ENCODE measurements at regions of chrX and their contacts with region 1.

Region 1: GRCh38 chrX:136920001-136920400 is 39.5 kb upstream of the RBMX start:
- DNase-seq: peak in 1 of 10 donors; percentile 19
- H3K4me3 ChIP-seq: no peak overlapping the region
- H3K27ac ChIP-seq: no peak overlapping the region
- H3K27me3 ChIP-seq: peaks cover 0 to 6% (median 0%) of the 10 kb centered on the region in 45 donors
- CTCF ChIP-seq: no peak

Region 2: GRCh38 chrX:136711147-136711546 is 208.9 kb before region 1 on chrX:
- intact Hi-C with region 1: loop called in 1 of 2 experiments (anchors 2 kb)
- DNase-seq: peak in 1 of 10 donors; percentile 35
- H3K4me3 ChIP-seq: no peak overlapping the region
- H3K27ac ChIP-seq: peak overlapping the region in 1 of 59 donors; percentile 22
- H3K27me3 ChIP-seq: peaks cover 0 to 78% (median 14%) of the 10 kb centered on the region in 45 donors
- CTCF ChIP-seq: peak in 46 of 56 donors; percentile 8 to 57 (median 32)

Region 3: GRCh38 chrX:136856551-136856950 is 63.5 kb before region 1 on chrX:
- intact Hi-C with region 1: no loop called
- DNase-seq: no peak
- H3K4me3 ChIP-seq: no peak overlapping the region
- H3K27ac ChIP-seq: no peak overlapping the region
- H3K27me3 ChIP-seq: peaks cover 0 to 41% (median 0%) of the 10 kb centered on the region in 45 donors
- CTCF ChIP-seq: no peak

Measured in dorsolateral prefrontal cortex (tissue), 120 donors.